ENCODE measurements at regions of chr1 and their contacts with region 1.

Region 1: DNA sequence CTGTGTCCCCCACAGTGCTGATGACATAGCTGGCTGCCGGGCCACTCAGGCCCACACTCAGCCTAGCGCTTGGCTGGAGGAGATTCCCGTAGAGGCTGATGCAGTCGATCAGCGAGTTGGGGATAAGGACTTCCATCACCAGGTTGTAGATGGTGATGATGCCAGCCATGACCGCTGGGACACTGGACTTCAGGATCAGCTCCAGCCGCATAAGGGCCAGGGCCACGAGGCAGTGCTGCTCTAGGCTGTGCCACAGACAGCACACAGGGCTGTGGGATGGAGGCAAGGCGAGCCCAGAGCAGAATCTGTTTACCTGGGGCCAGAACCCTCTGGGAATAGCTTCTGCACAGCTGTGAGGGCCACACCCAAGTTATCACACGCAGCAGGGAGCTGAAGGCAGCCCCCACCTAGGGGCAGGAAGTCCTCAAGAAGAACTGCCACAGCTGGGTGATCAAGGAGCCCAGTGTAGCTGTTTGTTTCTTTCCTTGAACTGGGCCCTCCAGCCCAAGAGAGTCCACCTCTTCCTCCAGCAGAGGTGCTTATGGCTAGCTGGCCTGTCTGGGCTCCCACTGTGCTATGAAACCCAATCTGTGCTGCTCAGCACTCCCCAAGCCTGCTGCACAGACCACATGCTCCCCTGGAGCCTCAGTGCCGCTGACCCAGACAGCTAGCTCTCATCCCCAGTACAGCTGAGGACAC is 6.2 kb downstream of the SLC2A1 start:
- DNase-seq: peak in 3 of 9 donors; percentile 33 to 49 (median 40)
- ATAC-seq: peak; percentile 72
- H3K4me3 ChIP-seq: peak overlapping the region; percentile 61
- H3K4me3 Mint-ChIP-seq: peak overlapping the region; percentile 20 to 85 (median 67)
- H3K27ac ChIP-seq: peak overlapping the region; percentile 57
- H3K27ac Mint-ChIP-seq: peak overlapping the region; percentile 28 to 89 (median 80)
- H3K4me1 ChIP-seq: peaks cover 84% of the 10 kb centered on the region in 2 donors
- H3K4me1 Mint-ChIP-seq: peaks cover 76 to 95% (median 87%) of the 10 kb centered on the region in 7 donors
- H3K27me3 ChIP-seq: no peaks in the 10 kb centered on the region
- H3K27me3 Mint-ChIP-seq: no peaks in the 10 kb centered on the region

Region 2: DNA sequence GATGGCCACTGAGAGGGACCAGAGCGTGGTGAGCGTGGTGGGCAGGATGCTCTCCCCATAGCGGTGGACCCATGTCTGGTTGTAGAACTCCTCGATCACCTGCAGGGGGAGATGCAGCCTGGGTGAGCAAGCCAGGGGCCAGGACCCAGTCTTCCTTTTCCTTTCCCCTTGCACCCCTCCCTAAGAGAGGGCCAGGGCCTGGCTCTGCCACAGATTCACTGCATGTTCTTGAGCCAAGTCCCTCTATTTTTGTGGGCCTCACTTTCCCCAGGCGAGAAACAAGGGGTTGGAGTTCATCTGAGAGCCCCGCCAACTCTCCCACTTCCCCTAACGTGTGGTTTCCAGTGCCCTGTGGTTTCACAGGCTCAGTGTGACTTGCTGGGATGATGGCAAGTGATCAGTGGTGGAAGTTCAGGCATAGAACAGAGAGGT is 21.3 kb before region 1 on chr1:
- CTCF ChIA-PET with region 1: interaction called, 5 read pairs
- POLR2A ChIA-PET with region 1: interaction called, 134 read pairs
- intact Hi-C with region 1: loop called in 1 of 2 experiments (anchors 1 kb)
- DNase-seq: peak; percentile 36 to 70 (median 58)
- ATAC-seq: peak; percentile 60
- H3K4me3 ChIP-seq: peak overlapping the region; percentile 41
- H3K4me3 Mint-ChIP-seq: peak overlapping the region; percentile 66 to 89 (median 80)
- H3K27ac ChIP-seq: peak overlapping the region; percentile 81
- H3K27ac Mint-ChIP-seq: peak overlapping the region; percentile 87 to 98 (median 93)
- H3K4me1 ChIP-seq: peaks cover 60 to 65% of the 10 kb centered on the region in 2 donors
- H3K4me1 Mint-ChIP-seq: peaks cover 43 to 81% (median 72%) of the 10 kb centered on the region in 7 donors
- H3K27me3 ChIP-seq: no peaks in the 10 kb centered on the region
- H3K27me3 Mint-ChIP-seq: no peaks in the 10 kb centered on the region

Region 3: GRCh38 chr1:42936309-42937078 is 16.0 kb before region 1 on chr1:
- CTCF ChIA-PET with region 1: interaction called, 5 read pairs
- POLR2A ChIA-PET with region 1: interaction called, 92 read pairs
- intact Hi-C with region 1: loop called in 1 of 2 experiments (anchors 1 kb)
- DNase-seq: peak in 1 of 9 donors; percentile 8
- ATAC-seq: peak; percentile 19
- H3K4me3 ChIP-seq: peak overlapping the region; percentile 16
- H3K4me3 Mint-ChIP-seq: peak overlapping the region in 7 of 10 donors; percentile 12 to 72 (median 40)
- H3K27ac ChIP-seq: peak overlapping the region; percentile 48
- H3K27ac Mint-ChIP-seq: peak overlapping the region; percentile 26 to 98 (median 92)
- H3K4me1 ChIP-seq: peaks cover 82 to 94% of the 10 kb centered on the region in 2 donors
- H3K4me1 Mint-ChIP-seq: peaks cover 77 to 99% (median 96%) of the 10 kb centered on the region in 7 donors
- H3K27me3 ChIP-seq: no peaks in the 10 kb centered on the region
- H3K27me3 Mint-ChIP-seq: no peaks in the 10 kb centered on the region

Region 4: DNA sequence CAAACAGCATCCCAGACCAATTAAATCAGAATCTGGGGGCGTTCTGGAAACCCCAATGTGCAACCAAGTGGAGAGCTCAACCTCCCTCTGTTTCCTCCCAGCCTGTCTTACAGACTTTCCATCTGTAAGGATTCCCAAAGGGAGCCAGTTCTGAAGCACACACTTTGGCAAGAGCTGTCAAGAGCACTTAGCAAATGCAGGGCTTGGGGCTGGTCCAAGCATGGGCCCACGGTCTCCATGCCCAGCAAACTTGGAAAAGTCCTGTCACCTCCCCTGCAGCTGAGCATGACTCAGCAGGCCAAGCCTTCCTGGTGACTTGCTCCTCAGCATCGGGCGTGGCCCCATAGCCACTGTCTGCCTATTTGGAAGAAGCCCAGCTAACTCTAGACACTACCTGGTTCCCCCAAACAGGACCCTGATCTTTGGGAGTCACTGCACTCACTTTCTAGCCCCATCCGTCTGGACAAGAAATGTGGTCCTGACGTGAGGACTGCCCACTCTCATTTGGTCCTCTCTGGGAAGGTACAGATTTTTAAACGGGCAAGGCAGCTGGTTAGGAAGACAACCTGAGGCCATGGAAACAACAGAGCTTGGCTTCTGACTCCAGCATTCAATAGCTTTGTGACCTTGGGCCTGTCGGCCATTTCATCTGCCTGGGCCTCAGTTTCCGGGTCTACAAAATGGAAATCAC is 10.7 kb before region 1 on chr1:
- CTCF ChIA-PET with region 1: interaction called, 3 read pairs
- POLR2A ChIA-PET with region 1: interaction called, 92 read pairs
- intact Hi-C with region 1: loop called in 1 of 2 experiments (anchors 1 kb)
- DNase-seq: peak in 1 of 9 donors; percentile 3
- ATAC-seq: no peak
- H3K4me3 ChIP-seq: no peak overlapping the region
- H3K4me3 Mint-ChIP-seq: peak overlapping the region in 4 of 10 donors; percentile 9 to 78 (median 65)
- H3K27ac ChIP-seq: no peak overlapping the region
- H3K27ac Mint-ChIP-seq: peak overlapping the region in 8 of 9 donors; percentile 69 to 95 (median 86)
- H3K4me1 ChIP-seq: peaks cover 82 to 95% of the 10 kb centered on the region in 2 donors
- H3K4me1 Mint-ChIP-seq: peaks cover 85 to 99% (median 97%) of the 10 kb centered on the region in 7 donors
- H3K27me3 ChIP-seq: no peaks in the 10 kb centered on the region
- H3K27me3 Mint-ChIP-seq: no peaks in the 10 kb centered on the region

Region 5: GRCh38 chr1:42979896-42980800 is 27.7 kb after region 1 on chr1:
- CTCF ChIA-PET with region 1: no interaction called
- POLR2A ChIA-PET with region 1: no interaction called
- intact Hi-C with region 1: no loop called
- DNase-seq: no peak
- ATAC-seq: peak; percentile 42
- H3K4me3 ChIP-seq: no peak overlapping the region
- H3K4me3 Mint-ChIP-seq: no peak overlapping the region
- H3K27ac ChIP-seq: no peak overlapping the region
- H3K27ac Mint-ChIP-seq: no peak overlapping the region
- H3K4me1 ChIP-seq: no peaks in the 10 kb centered on the region
- H3K4me1 Mint-ChIP-seq: peaks cover 0 to 8% (median 0%) of the 10 kb centered on the region in 7 donors
- H3K27me3 ChIP-seq: no peaks in the 10 kb centered on the region
- H3K27me3 Mint-ChIP-seq: no peaks in the 10 kb centered on the region